Uterus (tissue), 4 donors: ENCODE measurements at regions of chr5 and their contacts with region 1.

Region 1: GRCh38 chr5:149551200-149552037 is at the start of gene CSNK1A1:
- DNase-seq: peak; percentile 98 to 99
- H3K4me3 ChIP-seq: peak within 1 kb of the TSS; percentile 90 to 96
- H3K27ac ChIP-seq: peak within 1 kb of the TSS; percentile 98 to 99
- H3K4me1 ChIP-seq: no peaks in the 10 kb centered on the region
- H3K27me3 ChIP-seq: no peaks in the 10 kb centered on the region
- CTCF ChIP-seq: peak; percentile 75 to 91 (median 86)
- POLR2A ChIP-seq: peak; percentile 83 to 96
- total RNA-seq, gene CSNK1A1: 101 to 326 (median 205) TPM

Region 2: DNA sequence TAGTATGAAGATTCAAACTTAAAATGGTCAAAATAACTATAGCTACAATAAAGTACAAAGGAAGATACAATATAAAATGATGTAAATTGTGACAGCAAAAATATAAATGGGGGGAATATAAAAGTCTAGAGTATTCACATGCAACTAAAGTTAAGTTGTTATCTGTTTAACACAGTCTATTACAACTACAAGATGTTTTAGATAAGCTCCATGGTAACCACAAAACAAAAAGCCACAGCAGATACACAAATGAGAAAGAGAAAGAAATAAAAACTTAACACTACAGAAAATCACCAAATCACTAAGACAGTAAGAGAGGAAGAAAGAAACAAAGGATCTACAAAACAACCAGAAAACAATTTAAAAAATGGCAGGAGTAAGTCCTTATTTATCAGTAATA is 471.5 kb before region 1 on chr5:
- intact Hi-C with region 1: no loop called
- DNase-seq: no peak
- H3K4me3 ChIP-seq: no peak overlapping the region
- H3K27ac ChIP-seq: no peak overlapping the region
- H3K4me1 ChIP-seq: no peaks in the 10 kb centered on the region
- H3K27me3 ChIP-seq: no peaks in the 10 kb centered on the region
- CTCF ChIP-seq: no peak
- POLR2A ChIP-seq: no peak

Region 3: GRCh38 chr5:149108651-149109280 is 442.7 kb before region 1 on chr5:
- intact Hi-C with region 1: no loop called
- DNase-seq: no peak
- H3K4me3 ChIP-seq: no peak overlapping the region
- H3K27ac ChIP-seq: no peak overlapping the region
- H3K4me1 ChIP-seq: no peaks in the 10 kb centered on the region
- H3K27me3 ChIP-seq: no peaks in the 10 kb centered on the region
- CTCF ChIP-seq: no peak
- POLR2A ChIP-seq: no peak

Region 4: GRCh38 chr5:149442563-149443182 is 108.7 kb before region 1 on chr5:
- intact Hi-C with region 1: loop called (anchors 5 kb)
- DNase-seq: peak; percentile 82 to 90
- H3K4me3 ChIP-seq: no peak overlapping the region
- H3K27ac ChIP-seq: peak overlapping the region; percentile 78 to 93
- H3K4me1 ChIP-seq: peaks cover 0 to 3% of the 10 kb centered on the region in 2 donors
- H3K27me3 ChIP-seq: no peaks in the 10 kb centered on the region
- CTCF ChIP-seq: peak; percentile 88 to 98 (median 94)
- POLR2A ChIP-seq: no peak